H1 (cell line): ENCODE measurements at regions of chr17 and their contacts with region 1.

Region 1: DNA sequence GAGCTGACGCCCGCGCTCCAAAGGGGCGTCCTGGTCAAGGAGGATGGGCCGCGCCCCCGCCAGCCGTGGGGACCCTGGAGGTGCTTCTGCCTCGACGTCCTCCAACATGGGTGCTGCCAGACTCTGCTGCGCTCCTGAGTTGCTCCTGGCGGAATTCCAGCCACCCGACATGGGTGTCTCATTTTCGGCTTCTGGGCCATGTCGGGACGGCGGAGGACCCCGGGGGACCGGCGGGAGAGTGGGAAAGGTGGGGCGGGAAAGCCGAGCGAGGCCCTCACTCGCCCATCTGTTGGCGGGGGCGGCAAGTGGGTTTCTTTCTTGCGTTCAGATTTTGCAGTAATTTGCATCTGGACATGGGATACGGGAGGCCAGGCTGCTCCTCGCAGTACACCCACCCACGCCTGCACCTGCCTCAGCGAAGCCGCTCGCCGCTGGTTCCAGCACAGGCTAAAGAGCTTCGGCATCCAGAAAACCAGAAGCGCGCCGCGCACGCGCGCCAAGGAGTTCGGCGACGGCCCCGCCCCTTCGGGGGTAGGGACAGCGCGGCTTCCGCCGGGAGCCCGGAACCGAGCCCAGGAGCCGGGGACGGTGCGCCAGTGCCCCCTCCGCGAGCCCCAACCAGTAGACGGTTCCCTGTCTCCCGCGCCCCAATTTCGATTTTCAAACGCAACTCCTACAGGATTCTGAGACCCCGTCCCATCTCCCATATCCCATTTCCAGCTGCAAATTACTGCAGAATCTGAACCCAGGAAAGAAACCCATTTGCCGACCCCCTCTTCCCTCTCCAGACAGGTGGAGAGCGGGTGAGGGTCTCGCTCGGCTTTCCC is at the start of gene ARMC7:
- DNase-seq: peak in 1 of 2 experiments; percentile 97
- H3K4me3 ChIP-seq: peak within 1 kb of the TSS; percentile 49 to 78 (median 75)
- H3K27ac ChIP-seq: no peak within 1 kb of the TSS; the same call in 1 of the 2 replicates
- H3K4me1 ChIP-seq: peaks cover 0 to 2% (median under 1%) of the 10 kb centered on the region in 4 experiments; a peak in 3 of 7 replicates
- H3K27me3 ChIP-seq: no peaks in the 10 kb centered on the region
- CTCF ChIP-seq: no peak
- EP300 ChIP-seq: no peak
- POLR2A ChIP-seq: peak in 1 of 2 experiments; percentile 56; a peak in 2 of 3 replicates
- RAD21 ChIP-seq: no peak; a peak in 1 of 4 replicates
- total RNA-seq, gene ARMC7: 13.6 TPM in 2 replicates

Region 2: DNA sequence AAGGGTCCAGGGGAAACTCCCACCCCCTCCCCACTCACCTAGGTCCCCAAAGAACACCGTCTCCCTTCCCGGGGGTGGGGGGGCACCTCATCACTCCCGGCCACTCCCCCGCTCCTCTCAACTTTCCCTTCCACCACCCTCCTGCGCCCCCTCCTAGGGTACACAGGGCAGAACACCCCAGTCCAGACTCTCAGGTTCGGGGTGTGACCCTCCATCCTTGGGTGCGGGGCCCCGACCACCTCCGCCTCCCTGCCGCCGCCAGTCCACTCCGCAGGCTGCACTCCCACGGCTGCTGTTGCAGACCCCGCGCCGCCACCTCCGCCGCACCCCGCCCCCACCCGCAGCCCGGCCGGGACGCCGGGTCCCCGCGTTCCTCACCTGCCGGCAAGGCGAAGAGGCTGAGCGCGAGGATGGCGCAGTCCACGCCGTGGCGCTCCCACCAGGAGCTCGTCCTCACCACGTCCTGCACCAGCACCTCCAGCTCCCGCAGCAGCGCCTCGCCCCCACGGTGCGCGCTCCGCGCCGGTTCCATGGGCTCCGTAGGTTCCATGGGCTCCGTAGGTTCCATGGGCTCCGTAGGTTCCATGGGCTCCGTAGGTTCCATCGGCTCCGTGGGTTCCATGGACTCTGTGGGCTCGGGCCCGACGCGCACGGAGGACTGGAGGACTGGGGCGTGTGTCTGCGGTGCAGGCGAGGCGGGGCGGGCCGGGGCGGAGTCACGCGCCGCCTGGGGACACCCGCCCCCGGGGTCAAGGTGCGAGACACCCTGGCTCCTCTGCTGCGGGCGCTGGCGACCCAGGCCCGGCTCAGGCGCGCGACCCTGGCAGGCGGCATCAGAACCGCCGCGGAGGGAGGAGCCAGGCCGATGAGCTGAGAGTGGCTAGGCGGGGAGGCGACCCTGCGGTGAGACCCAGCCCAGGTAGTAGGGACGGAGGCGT is 216.4 kb before region 1 on chr17 and contains the start of gene FADS6:
- CTCF ChIA-PET with region 1: no interaction called
- POLR2A ChIA-PET with region 1: no interaction called
- DNase-seq: no peak
- H3K4me3 ChIP-seq: peak within 1 kb of the TSS; percentile 61 to 75 (median 64)
- H3K27ac ChIP-seq: no peak within 1 kb of the TSS
- H3K4me1 ChIP-seq: peaks cover 0 to 10% (median 4%) of the 10 kb centered on the region in 4 experiments; a peak in 4 of 7 replicates
- H3K27me3 ChIP-seq: peaks cover 16 to 43% (median 37%) of the 10 kb centered on the region in 4 experiments; a peak in 6 of 7 replicates
- CTCF ChIP-seq: no peak
- EP300 ChIP-seq: no peak
- POLR2A ChIP-seq: no peak
- RAD21 ChIP-seq: no peak
- total RNA-seq, gene FADS6: 0.56 and 0.80 TPM in 2 replicates

Region 3: GRCh38 chr17:75059369-75060345 is 50.0 kb before region 1 on chr17:
- CTCF ChIA-PET with region 1: interaction called, 81 read pairs
- POLR2A ChIA-PET with region 1: interaction called, 5 read pairs
- DNase-seq: no peak
- H3K4me3 ChIP-seq: no peak overlapping the region
- H3K27ac ChIP-seq: no peak overlapping the region
- H3K4me1 ChIP-seq: no peaks in the 10 kb centered on the region
- H3K27me3 ChIP-seq: no peaks in the 10 kb centered on the region
- CTCF ChIP-seq: peak in 2 of 3 experiments; percentile 27; a peak in 2 of 4 replicates
- EP300 ChIP-seq: no peak
- POLR2A ChIP-seq: no peak
- RAD21 ChIP-seq: peak; percentile 13 to 38; a peak in 2 of 4 replicates

Region 4: GRCh38 chr17:75077496-75078283 is 31.9 kb before region 1 on chr17:
- CTCF ChIA-PET with region 1: interaction called, 64 read pairs
- POLR2A ChIA-PET with region 1: interaction called, 5 read pairs
- DNase-seq: no peak
- H3K4me3 ChIP-seq: peak overlapping the region in 1 of 4 experiments; percentile 6; a peak in 1 of 8 replicates
- H3K27ac ChIP-seq: no peak overlapping the region
- H3K4me1 ChIP-seq: peaks cover 0 to 16% (median 8%) of the 10 kb centered on the region in 4 experiments; a peak in 6 of 7 replicates
- H3K27me3 ChIP-seq: no peaks in the 10 kb centered on the region
- CTCF ChIP-seq: peak in 2 of 3 experiments; percentile 4; a peak in 1 of 4 replicates
- EP300 ChIP-seq: no peak
- POLR2A ChIP-seq: no peak
- RAD21 ChIP-seq: no peak; a peak in 1 of 4 replicates

Region 5: DNA sequence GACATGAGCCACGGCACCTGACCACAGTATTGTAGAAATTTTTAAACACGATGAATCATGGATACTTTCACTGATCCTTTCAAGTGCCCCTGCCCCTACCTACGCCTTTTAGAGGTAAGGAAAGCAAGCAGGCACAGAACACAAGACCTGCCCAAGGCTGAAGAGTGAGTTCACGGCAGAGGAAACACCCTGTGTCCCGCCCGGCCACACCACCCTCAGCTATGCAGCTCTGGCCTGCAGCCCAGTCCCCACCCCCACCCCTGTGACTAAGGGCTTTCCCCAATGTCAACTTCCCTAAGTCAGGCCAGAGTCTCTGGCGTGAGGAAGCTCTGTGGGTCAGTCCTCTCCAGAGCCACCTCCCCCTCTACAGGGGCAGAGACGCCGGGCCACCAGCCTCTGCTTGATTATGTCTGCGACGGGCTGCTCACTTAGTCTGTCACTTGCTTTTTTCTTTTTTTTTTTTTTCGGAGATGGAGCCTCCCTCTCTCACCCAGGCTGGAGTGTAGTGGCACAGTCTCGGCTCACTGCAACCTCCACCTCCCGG is 13.5 kb before region 1 on chr17:
- CTCF ChIA-PET with region 1: interaction called, 81 read pairs
- POLR2A ChIA-PET with region 1: interaction called, 10 read pairs
- DNase-seq: no peak
- H3K4me3 ChIP-seq: no peak overlapping the region
- H3K27ac ChIP-seq: no peak overlapping the region
- H3K4me1 ChIP-seq: peaks cover 0 to 13% (median 8%) of the 10 kb centered on the region in 4 experiments; a peak in 6 of 7 replicates
- H3K27me3 ChIP-seq: no peaks in the 10 kb centered on the region
- CTCF ChIP-seq: no peak
- EP300 ChIP-seq: no peak
- POLR2A ChIP-seq: no peak
- RAD21 ChIP-seq: no peak

Region 6: GRCh38 chr17:75131280-75132017 is 21.8 kb after region 1 on chr17 and contains the start of gene NT5C:
- CTCF ChIA-PET with region 1: interaction called, 239 read pairs
- POLR2A ChIA-PET with region 1: interaction called, 134 read pairs
- DNase-seq: peak; percentile 58 to 91
- H3K4me3 ChIP-seq: peak within 1 kb of the TSS; percentile 69 to 95 (median 74)
- H3K27ac ChIP-seq: peak within 1 kb of the TSS; percentile 81
- H3K4me1 ChIP-seq: peaks cover 0 to 5% (median 4%) of the 10 kb centered on the region in 4 experiments; a peak in 5 of 7 replicates
- H3K27me3 ChIP-seq: no peaks in the 10 kb centered on the region
- CTCF ChIP-seq: peak; percentile 65 to 72 (median 68)
- EP300 ChIP-seq: no peak
- POLR2A ChIP-seq: peak; percentile 72 to 75; a peak in 2 of 3 replicates
- RAD21 ChIP-seq: peak; percentile 32 to 42; a peak in 2 of 4 replicates
- total RNA-seq, gene NT5C: 52.1 and 66.9 TPM in 2 replicates

Region 7: DNA sequence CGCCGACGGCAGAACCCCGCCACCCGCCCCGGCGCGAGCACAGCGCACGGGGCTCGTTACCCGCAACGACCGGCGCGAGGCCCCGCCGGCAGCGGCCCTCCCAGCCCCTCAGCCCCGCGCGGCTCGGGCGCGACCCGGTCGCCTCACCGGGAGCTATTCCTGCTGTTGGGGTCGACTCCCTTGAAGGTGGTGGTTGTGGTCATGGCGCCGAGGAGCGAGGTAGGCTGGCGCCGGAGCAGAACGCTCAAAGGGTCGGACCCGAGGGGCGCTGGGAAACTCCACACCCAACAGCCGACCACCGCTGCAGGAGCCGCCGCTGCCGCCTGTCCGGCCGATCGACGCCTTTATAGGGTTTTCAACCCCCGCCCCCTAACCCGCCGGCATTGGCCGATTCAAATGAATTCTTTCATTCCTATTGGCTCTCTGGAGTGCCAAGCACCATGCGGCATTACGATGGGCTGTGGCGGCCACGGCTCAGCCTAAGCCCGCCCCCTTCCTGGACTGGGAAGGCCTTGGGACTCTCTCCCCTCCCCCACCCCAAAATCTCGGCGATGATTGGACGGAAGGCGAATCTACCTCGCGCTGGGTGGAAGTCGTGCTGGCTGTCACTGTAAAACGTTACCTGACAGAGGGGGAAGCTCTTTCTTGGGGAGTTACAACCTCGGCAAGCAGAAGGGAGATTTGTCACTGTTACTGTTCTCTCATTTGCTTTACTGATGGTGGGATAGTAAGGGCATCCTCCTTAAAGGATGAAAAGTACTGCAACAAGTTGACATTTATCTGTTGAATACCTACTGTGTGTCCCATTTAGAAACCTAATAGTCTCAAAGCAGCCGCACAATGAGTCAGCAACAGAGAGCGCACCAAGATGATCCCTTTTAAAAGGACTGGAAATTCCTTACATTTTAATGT is 44.8 kb after region 1 on chr17 and contains the start of gene JPT1:
- CTCF ChIA-PET with region 1: interaction called, 14 read pairs
- POLR2A ChIA-PET with region 1: interaction called, 8 read pairs
- DNase-seq: peak; percentile 95 to 99
- H3K4me3 ChIP-seq: peak within 1 kb of the TSS; percentile 87 to 95 (median 94)
- H3K27ac ChIP-seq: peak within 1 kb of the TSS; percentile 53
- H3K4me1 ChIP-seq: peaks cover 3 to 12% (median 9%) of the 10 kb centered on the region in 4 experiments; a peak in 6 of 7 replicates
- H3K27me3 ChIP-seq: no peaks in the 10 kb centered on the region
- CTCF ChIP-seq: no peak
- EP300 ChIP-seq: no peak
- POLR2A ChIP-seq: peak; percentile 100
- RAD21 ChIP-seq: no peak
- total RNA-seq, gene JPT1: 340 and 369 TPM in 2 replicates

Region 8: GRCh38 chr17:75199886-75200618 is 90.4 kb after region 1 on chr17:
- CTCF ChIA-PET with region 1: interaction called, 41 read pairs
- POLR2A ChIA-PET with region 1: interaction called, 4 read pairs
- DNase-seq: no peak
- H3K4me3 ChIP-seq: no peak overlapping the region
- H3K27ac ChIP-seq: no peak overlapping the region
- H3K4me1 ChIP-seq: peaks cover 0 to 2% (median 0%) of the 10 kb centered on the region in 4 experiments; a peak in 2 of 7 replicates
- H3K27me3 ChIP-seq: no peaks in the 10 kb centered on the region
- CTCF ChIP-seq: no peak
- EP300 ChIP-seq: no peak
- POLR2A ChIP-seq: no peak
- RAD21 ChIP-seq: no peak